Left cardiac atrium (tissue), 4 donors: ENCODE measurements at regions of chr3 and their contacts with region 1.

Region 1: GRCh38 chr3:134473868-134474546 is 11.8 kb downstream of the ANAPC13 start:
- DNase-seq: peak; percentile 74
- ATAC-seq: peak; percentile 35 to 65

Region 2: DNA sequence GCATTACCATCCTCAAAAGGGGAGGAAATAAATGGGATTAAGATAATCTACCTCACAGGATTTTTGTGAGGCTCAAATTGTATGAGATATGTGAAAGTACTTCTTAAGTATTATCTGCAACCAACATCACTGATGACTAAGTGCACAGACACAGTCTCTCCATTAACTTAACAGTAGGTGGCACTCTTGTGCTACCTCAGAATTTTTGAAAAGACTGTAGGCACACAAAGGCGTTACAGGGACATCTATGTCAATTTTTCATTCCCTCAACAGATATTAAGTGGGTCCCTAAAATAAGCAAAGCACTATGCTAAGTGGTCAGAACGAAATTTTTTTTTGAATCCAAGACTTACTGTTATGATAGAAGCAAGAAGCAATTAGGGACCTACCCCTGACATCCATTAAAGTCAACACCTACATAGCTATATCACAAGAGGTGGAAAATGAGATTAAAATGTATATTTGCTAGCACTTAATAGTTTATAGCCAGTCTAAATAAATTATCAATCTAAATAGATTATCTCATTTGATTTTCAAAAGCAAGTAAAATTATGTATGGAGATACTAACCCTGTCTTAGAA is 276.2 kb before region 1 on chr3:
- intact Hi-C with region 1: loop called in 1 of 2 experiments (anchors 5 kb)
- DNase-seq: no peak
- ATAC-seq: peak; percentile 81 to 87

Region 3: GRCh38 chr3:134212906-134213665 is 260.9 kb before region 1 on chr3:
- intact Hi-C with region 1: loop called in 1 of 2 experiments (anchors 5 kb)
- DNase-seq: peak; percentile 80
- ATAC-seq: peak; percentile 81 to 89

Region 4: GRCh38 chr3:134308350-134308891 is 165.6 kb before region 1 on chr3:
- intact Hi-C with region 1: loop called (anchors 1 to 2 kb)
- DNase-seq: peak; percentile 82
- ATAC-seq: peak; percentile 57 to 65

Region 5: GRCh38 chr3:134357261-134358184 is 116.5 kb before region 1 on chr3:
- intact Hi-C with region 1: no loop called
- DNase-seq: peak; percentile 20
- ATAC-seq: peak; percentile 70 to 83

Region 6: DNA sequence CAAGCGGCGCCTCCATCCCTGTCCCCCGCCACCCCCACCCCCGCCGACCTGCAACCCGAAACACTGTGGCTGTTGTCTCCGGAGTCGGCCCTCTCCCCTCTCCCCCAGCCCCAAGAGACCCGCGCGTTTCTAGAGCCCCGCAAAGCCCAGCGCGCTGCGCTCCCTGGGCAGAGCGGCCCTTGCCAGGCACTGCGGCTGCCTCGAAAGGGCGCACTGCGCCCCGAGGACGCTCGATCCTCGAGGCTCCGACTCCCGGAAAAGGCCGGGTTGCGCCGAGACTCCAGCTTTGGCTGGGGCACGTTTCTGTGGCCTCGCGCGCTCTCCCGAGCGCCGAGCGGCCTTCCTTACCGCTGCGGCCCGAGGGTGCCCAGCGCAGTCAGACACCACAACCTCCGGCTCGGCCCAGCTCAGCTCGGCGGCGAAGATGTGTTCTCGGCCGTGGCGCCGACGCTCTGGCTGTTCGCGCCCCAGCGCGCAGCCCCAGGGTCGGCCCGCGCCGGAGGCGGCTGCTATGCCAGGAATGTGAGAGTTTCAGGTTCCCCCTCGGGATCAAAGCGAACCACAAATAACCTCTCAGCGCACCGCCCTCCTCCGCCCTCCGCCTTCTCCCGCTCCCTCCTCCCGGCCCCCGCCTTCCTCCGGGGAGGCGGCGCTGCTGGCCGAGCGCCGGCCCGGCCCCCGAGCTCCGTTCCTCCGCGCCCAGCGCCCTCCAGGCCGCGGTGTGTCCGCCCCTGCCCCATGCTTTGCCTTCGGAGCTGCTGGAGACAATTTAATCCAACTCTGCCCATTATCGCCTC is 99.8 kb before region 1 on chr3 and contains the start of gene AMOTL2:
- intact Hi-C with region 1: loop called (anchors 5 to 10 kb)
- DNase-seq: peak; percentile 89
- ATAC-seq: peak; percentile 83 to 86
- total RNA-seq, gene AMOTL2: 47.9 to 59.3 TPM

Region 7: DNA sequence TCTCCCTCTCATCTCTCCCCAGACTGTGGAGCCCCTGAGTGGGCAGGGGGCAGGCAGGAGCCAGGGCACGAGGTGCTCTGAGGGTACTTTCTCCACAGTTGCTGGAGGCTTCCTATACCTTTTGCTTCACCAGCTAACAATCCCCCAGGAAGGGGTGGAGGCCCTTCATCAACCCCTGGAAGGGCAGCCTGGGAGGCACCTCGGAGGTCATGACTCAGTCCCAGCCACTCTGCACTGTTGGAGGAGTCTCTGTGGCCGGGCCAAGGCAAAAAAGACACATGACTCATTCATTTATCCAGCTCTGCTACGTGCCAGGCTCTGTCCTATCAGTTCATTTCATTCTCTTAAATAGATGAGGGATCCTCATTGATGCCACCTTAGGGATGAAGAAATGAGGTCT is 192.5 kb after region 1 on chr3:
- intact Hi-C with region 1: no loop called
- DNase-seq: no peak
- ATAC-seq: peak in 1 of 2 donors; percentile 88

Region 8: GRCh38 chr3:134898181-134898754 is 424.3 kb after region 1 on chr3:
- intact Hi-C with region 1: no loop called
- DNase-seq: no peak
- ATAC-seq: no peak